Dendritic cell treated with granulocyte-macrophage colony-stimulating factor and Interleukin-4, amounts not matched to agents 40 ng/mL and 50 ng/mL, for 4 days (primary cell): ENCODE measurements at regions of chr19 and their contacts with region 1.

Region 1: DNA sequence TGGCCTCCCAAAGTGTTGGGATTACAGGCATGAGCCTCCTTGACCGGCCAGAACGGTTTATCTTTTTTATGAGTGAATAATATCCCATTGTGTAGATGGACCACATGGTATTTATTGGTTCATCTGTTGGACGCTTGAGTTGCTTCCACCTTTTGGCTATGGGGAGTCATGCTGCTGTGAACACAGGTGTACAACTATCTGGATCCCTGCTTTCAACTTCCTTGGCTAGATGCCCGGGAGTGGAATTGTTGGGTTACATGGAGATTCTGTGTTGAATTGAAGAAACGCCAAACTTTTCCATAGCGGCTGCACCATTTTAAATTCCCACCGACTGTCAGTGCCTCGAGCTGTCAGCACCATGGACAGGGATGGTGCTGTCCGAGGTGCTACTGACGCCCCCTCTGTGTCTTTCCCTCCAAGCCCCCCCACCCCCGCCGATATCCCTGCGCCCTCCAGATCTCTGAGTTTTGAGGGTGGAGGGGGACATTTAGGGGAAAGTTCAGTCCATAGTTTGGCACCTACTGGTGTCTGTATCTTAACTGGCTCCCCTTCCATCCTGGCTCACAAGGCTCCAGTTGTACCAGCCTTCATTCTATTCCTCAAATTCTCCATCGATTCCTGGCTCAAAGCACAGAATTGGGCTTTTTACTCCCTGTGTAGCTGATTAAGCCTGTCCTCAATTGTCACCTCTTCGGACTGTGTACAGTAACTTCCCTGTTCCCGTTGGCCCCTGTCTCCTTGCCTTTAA is 27.3 kb downstream of the PNPLA6 start:
- H3K4me3 Mint-ChIP-seq: no peak overlapping the region
- H3K27ac Mint-ChIP-seq: no peak overlapping the region
- H3K4me1 Mint-ChIP-seq: peaks cover 11% of the 10 kb centered on the region
- H3K27me3 Mint-ChIP-seq: no peaks in the 10 kb centered on the region

Region 2: GRCh38 chr19:7333198-7334118 is 229.4 kb before region 1 on chr19:
- intact Hi-C with region 1: no loop called
- H3K4me3 Mint-ChIP-seq: no peak overlapping the region
- H3K27ac Mint-ChIP-seq: no peak overlapping the region
- H3K4me1 Mint-ChIP-seq: peaks cover 34% of the 10 kb centered on the region
- H3K27me3 Mint-ChIP-seq: peaks cover 16% of the 10 kb centered on the region

Region 3: DNA sequence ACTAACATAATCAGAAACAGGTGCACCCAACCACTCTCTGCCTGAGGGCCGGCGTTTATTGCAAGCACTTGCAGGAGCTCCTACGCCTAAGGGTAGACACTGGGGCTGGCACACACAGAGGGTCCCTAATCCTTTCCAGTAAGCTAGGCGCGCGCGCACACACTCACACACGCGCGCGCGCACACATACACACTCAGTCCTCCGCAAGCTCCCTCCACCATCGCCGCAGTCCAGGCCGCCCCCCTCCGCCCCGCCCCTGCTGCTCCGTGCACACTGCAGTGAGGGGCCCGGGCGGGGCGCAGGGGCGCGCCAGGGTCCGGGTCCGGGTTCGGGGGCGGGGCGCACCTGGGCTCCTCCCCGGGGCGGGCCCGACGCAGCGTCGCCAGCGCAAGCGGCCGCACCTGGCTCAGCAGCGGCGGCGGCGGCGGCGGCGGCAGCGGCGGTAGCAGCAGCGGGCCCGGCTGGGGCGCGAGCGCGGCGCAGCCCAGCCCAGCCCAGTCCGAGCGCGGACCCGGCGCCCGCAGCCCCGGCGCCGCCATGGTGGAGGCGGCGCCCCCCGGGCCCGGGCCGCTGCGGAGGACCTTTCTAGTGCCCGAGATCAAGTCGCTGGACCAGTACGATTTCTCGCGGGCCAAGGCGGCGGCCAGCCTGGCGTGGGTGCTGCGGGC is 32.8 kb after region 1 on chr19 and contains the start of gene CAMSAP3:
- intact Hi-C with region 1: no loop called
- H3K4me3 Mint-ChIP-seq: peak within 1 kb of the TSS; percentile 74
- H3K27ac Mint-ChIP-seq: no peak within 1 kb of the TSS
- H3K4me1 Mint-ChIP-seq: peaks cover 12% of the 10 kb centered on the region
- H3K27me3 Mint-ChIP-seq: peaks cover 73% of the 10 kb centered on the region

Region 4: DNA sequence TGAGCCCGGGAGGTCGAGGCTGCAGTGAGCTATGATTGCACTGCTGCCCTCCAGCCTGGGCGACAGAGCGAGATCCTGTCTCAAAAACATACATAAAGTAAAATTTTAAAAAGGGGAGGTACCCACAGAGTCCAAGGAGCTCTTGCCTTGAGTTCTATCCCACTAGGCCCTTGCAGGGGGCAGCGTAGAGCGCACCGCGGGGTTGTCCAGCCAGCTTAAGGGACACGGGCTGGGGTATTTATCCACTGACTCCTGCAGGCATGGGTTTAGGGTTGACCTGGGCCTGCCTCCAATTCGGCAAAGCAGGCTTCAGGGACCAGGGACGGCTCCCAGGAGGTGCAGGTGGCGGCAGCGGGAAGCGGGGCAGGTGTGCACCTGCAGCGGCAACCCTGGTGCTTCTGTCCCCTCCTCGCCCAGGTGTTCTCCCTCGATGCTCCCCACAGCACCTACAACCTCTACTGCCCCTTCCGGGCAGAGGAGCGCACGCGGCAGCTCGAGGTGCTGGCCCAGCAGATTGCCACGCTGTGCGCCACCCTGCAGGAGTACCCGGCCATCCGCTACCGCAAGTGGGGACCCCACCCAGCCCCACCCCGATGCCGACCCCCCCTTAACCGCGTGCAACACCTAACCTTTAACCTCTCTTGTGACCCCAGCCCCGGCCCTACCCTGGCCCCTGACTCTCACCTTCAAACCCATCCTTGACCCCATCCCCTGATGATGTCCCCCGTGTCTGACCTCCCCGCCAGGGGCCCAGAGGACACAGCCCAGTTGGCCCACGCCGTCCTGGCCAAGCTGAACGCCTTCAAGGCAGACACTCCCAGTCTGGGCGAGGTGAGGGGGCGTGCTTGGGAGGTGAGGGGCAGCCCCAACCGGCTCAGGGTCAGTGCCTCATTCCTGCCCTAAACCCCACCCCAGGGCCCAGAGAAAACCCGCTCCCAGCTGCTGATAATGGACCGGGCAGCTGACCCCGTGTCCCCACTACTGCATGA is 78.8 kb after region 1 on chr19:
- intact Hi-C with region 1: loop called (anchors 10 kb)
- H3K4me3 Mint-ChIP-seq: no peak overlapping the region
- H3K27ac Mint-ChIP-seq: no peak overlapping the region
- H3K4me1 Mint-ChIP-seq: peaks cover 89% of the 10 kb centered on the region
- H3K27me3 Mint-ChIP-seq: no peaks in the 10 kb centered on the region

Region 5: GRCh38 chr19:7799640-7800355 is 237.0 kb after region 1 on chr19:
- intact Hi-C with region 1: loop called (anchors 5 kb)
- H3K4me3 Mint-ChIP-seq: peak overlapping the region; percentile 67
- H3K27ac Mint-ChIP-seq: peak overlapping the region; percentile 78
- H3K4me1 Mint-ChIP-seq: peaks cover 12% of the 10 kb centered on the region
- H3K27me3 Mint-ChIP-seq: peaks cover 3% of the 10 kb centered on the region